Activated CD4-positive, alpha-beta T cell treated with anti-CD3 and anti-CD28 coated beads, Interleukin-2, amount 10 ng/mL, durations not matched to agents 24 days and 14 days (primary cell): ENCODE measurements at regions of chr17 and their contacts with region 1.

Region 1: GRCh38 chr17:4565209-4566141 is 5.1 kb upstream of the GGT6 start:
- DNase-seq: peak; percentile 87
- H3K4me3 Mint-ChIP-seq: peak overlapping the region; percentile 48
- H3K27ac Mint-ChIP-seq: peak overlapping the region; percentile 53
- H3K4me1 Mint-ChIP-seq: peaks cover 42% of the 10 kb centered on the region
- H3K27me3 Mint-ChIP-seq: peaks cover 10% of the 10 kb centered on the region

Region 2: DNA sequence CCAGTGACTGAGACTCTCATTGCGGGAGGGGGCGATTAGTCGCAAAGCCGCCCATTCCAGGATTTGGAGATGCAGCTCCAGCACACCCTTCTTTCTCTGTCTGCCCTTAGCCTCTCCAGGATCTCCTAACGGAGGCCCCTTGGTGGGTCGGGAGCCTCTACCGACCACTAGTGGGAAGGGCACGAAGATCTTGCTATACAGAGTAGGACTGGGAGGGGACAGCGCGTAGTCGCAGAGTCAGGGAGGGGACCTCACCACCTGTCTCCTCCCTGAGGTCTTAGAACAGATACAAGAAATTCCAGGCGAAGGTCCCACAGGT is 18.3 kb after region 1 on chr17:
- intact Hi-C with region 1: no loop called
- DNase-seq: no peak
- H3K4me3 Mint-ChIP-seq: peak overlapping the region; percentile 57
- H3K27ac Mint-ChIP-seq: no peak overlapping the region
- H3K4me1 Mint-ChIP-seq: peaks cover 2% of the 10 kb centered on the region
- H3K27me3 Mint-ChIP-seq: peaks cover 49% of the 10 kb centered on the region

Region 3: GRCh38 chr17:4626734-4627256 is 61.3 kb after region 1 on chr17:
- intact Hi-C with region 1: loop called (anchors 1 kb)
- DNase-seq: no peak
- H3K4me3 Mint-ChIP-seq: no peak overlapping the region
- H3K27ac Mint-ChIP-seq: no peak overlapping the region
- H3K4me1 Mint-ChIP-seq: peaks cover 6% of the 10 kb centered on the region
- H3K27me3 Mint-ChIP-seq: peaks cover 39% of the 10 kb centered on the region

Region 4: DNA sequence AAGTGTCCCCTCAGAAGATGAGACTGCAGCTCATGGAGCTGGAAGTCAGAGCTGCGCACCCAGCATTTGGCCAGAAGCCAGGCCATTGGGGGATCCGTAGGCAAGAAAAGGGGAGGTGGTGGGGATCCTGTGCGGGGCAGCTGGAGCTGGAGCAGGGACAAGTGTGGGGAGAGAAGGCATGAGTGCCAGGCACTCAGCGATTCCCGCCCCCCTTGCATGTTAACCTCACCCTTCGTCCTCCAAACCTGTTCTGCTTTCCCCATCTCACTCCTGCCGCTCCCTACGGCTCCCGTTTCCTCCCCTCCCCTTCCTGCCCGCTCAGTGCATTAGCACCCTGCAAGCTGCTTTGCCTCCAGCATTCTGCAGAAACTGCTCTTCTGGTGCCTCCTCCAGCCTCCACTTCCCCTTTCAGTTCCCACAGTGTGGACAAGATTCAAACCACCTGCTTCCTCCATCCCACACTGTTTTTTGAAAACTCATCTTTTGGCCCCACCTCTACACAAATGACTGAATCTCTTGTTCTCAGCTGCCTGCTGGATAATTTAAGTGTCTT is 70.4 kb after region 1 on chr17:
- intact Hi-C with region 1: loop called (anchors 5 kb)
- DNase-seq: no peak
- H3K4me3 Mint-ChIP-seq: peak overlapping the region; percentile 23
- H3K27ac Mint-ChIP-seq: no peak overlapping the region
- H3K4me1 Mint-ChIP-seq: peaks cover 19% of the 10 kb centered on the region
- H3K27me3 Mint-ChIP-seq: peaks cover 58% of the 10 kb centered on the region

Region 5: DNA sequence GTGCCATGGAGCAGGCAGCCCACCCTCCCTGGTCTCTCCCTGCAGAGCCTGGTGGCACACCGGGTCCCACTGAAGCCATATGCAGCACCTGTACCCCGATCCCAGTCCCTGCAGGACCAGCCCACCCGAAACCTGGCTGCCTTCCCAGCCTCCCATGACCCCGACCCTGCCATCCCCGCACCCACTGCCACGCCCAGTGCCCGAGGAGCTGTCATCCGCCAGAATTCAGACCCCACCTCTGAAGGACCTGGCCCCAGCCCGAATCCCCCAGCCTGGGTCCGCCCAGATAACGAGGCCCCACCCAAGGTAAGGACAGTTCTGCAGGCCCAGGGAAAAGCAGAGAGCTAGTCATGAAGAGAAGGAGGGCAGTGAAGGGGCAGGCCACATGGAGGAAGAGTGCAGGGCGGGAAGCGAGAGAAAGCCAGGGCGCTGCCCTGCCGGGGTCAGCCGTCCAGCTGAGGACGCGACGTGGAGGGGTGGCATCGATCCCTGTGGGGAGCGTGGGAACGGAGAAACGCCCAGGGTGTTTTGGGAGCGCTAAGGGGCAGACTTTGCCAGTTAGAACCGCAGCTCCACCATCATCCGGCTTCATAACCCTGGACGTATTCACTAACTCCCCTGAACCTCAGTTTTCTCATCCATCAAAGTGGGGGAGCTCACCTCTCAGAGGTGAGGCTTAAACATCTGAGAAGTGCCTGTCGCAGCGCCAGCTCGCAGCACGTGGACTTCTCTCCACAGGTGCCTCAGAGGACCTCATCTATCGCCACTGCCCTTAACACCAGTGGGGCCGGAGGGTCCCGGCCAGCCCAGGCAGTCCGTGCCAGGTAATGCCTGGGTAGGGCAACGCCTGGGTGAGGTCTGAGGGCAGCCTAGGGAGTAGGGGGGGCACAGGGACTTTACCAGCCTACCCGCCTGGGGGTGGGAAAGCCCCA is 326.2 kb after region 1 on chr17:
- intact Hi-C with region 1: loop called (anchors 2 kb)
- DNase-seq: no peak
- H3K4me3 Mint-ChIP-seq: no peak overlapping the region
- H3K27ac Mint-ChIP-seq: no peak overlapping the region
- H3K4me1 Mint-ChIP-seq: no peaks in the 10 kb centered on the region
- H3K27me3 Mint-ChIP-seq: no peaks in the 10 kb centered on the region

Region 6: GRCh38 chr17:4903051-4903818 is 337.8 kb after region 1 on chr17 and contains the start of gene CHRNE:
- intact Hi-C with region 1: loop called (anchors 5 kb)
- DNase-seq: peak; percentile 93
- H3K4me3 Mint-ChIP-seq: peak within 1 kb of the TSS; percentile 30
- H3K27ac Mint-ChIP-seq: peak within 1 kb of the TSS; percentile 30
- H3K4me1 Mint-ChIP-seq: peaks cover 26% of the 10 kb centered on the region
- H3K27me3 Mint-ChIP-seq: peaks cover 6% of the 10 kb centered on the region
- total RNA-seq, gene CHRNE: 0.42 and 0.64 TPM in 2 replicates